Activated CD4-positive, alpha-beta T cell treated with anti-CD3 and anti-CD28 coated beads for 36 hours (primary cell): ENCODE measurements at regions of chr2 and their contacts with region 1.

Region 1: DNA sequence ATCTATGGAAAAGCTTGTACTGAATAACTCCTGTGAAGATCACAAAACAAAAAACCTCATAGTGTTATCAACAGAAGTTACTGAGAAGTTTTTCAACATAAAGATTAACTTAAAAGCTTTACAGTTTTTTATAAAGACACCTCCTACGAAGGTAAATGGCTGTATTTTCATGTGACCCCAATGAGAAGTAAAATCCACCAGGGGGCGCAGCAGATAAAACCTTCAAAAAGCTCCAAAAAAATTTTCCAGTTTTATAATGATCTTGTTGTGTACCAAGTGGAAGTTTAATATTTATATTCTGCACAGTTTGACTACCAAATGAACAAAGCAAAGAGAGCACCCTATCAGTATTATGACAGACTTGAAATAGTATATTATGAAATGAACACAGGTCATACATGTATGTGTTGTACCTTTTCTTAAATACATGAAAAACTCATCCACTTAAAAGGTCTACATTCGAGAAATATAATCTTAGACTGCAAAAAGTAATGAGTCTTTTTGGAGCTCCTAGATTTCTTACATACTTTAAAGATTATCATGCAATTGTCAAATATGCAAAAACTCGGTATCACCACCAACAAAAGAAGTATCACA is 38.5 kb downstream of the PNO1 start:
- DNase-seq: peak; percentile 57
- ATAC-seq: no peak
- H3K4me3 Mint-ChIP-seq: no peak overlapping the region
- H3K27ac Mint-ChIP-seq: no peak overlapping the region
- H3K4me1 Mint-ChIP-seq: peaks cover 52% of the 10 kb centered on the region
- H3K27me3 Mint-ChIP-seq: no peaks in the 10 kb centered on the region

Region 2: GRCh38 chr2:68185541-68186164 is 10.6 kb before region 1 on chr2:
- CTCF ChIA-PET with region 1: interaction called, 31 read pairs
- POLR2A ChIA-PET with region 1: no interaction called
- intact Hi-C with region 1: no loop called
- DNase-seq: peak; percentile 81
- ATAC-seq: peak; percentile 51
- H3K4me3 Mint-ChIP-seq: no peak overlapping the region
- H3K27ac Mint-ChIP-seq: no peak overlapping the region
- H3K4me1 Mint-ChIP-seq: peaks cover 20% of the 10 kb centered on the region
- H3K27me3 Mint-ChIP-seq: no peaks in the 10 kb centered on the region

Region 3: GRCh38 chr2:68217729-68218128 is 21.5 kb after region 1 on chr2:
- CTCF ChIA-PET with region 1: interaction called, 12 read pairs
- POLR2A ChIA-PET with region 1: interaction called, 3 read pairs
- intact Hi-C with region 1: loop called in 1 of 2 experiments (anchors 2 kb)
- DNase-seq: no peak
- ATAC-seq: no peak
- H3K4me3 Mint-ChIP-seq: no peak overlapping the region
- H3K27ac Mint-ChIP-seq: no peak overlapping the region
- H3K4me1 Mint-ChIP-seq: peaks cover 80% of the 10 kb centered on the region
- H3K27me3 Mint-ChIP-seq: no peaks in the 10 kb centered on the region

Region 4: GRCh38 chr2:68225119-68225632 is 29.0 kb after region 1 on chr2:
- CTCF ChIA-PET with region 1: interaction called, 18 read pairs
- POLR2A ChIA-PET with region 1: interaction called, 5 read pairs
- intact Hi-C with region 1: no loop called
- DNase-seq: peak; percentile 33
- ATAC-seq: peak; percentile 61
- H3K4me3 Mint-ChIP-seq: no peak overlapping the region
- H3K27ac Mint-ChIP-seq: no peak overlapping the region
- H3K4me1 Mint-ChIP-seq: peaks cover 84% of the 10 kb centered on the region
- H3K27me3 Mint-ChIP-seq: no peaks in the 10 kb centered on the region

Region 5: DNA sequence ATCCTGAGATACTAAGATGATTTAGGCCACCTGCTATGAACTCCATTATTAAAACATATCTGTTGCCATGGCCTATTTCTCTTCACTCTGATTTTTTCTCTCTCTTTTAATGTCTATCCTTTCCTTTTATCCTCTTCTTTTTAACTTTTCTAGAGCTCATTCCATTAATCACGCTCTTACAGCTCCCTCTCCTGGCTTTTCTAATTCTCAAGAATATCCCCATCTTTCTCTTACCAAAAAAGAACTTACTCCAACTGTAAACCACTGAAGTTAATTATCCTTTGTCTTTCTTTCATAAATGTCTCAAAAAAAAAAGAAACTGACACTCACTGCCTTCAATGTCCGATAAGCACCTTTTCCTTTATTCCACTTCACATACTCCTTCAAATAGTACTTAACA is 48.2 kb after region 1 on chr2:
- CTCF ChIA-PET with region 1: interaction called, 13 read pairs
- POLR2A ChIA-PET with region 1: no interaction called
- intact Hi-C with region 1: loop called in 1 of 2 experiments (anchors 5 kb)
- DNase-seq: no peak
- ATAC-seq: no peak
- H3K4me3 Mint-ChIP-seq: no peak overlapping the region
- H3K27ac Mint-ChIP-seq: no peak overlapping the region
- H3K4me1 Mint-ChIP-seq: peaks cover 29% of the 10 kb centered on the region
- H3K27me3 Mint-ChIP-seq: no peaks in the 10 kb centered on the region

Region 6: DNA sequence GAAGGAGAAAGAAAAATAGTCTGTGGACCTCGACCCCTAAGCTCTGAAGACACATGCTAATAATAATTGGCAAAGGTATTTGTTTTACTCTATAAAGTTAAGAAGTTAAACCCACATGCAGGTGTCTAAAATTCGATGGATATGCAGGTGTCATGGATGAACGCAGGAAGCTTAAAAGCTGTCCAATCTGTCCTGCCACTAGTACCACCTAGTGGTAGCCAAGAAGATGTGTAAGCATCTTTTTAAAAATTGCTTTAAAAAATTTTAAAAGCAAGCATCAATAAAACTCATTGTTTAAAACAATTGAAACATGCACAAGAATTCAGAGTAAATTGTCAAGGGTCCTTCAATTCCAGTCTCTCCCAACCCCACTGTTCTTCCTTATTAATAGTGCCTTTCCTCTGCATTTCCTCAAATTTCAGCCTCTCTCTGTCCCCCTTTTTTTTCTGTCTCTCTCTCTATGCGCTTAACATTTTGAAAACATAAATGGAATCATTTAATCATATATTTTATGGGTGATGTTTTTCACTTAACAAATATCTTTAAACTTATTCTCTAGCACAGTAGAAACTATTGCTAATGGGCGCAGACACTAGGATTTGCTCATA is 86.7 kb after region 1 on chr2:
- CTCF ChIA-PET with region 1: interaction called, 16 read pairs
- POLR2A ChIA-PET with region 1: no interaction called
- intact Hi-C with region 1: loop called in 1 of 2 experiments (anchors 2 kb)
- DNase-seq: peak; percentile 30
- ATAC-seq: peak; percentile 64
- H3K4me3 Mint-ChIP-seq: no peak overlapping the region
- H3K27ac Mint-ChIP-seq: no peak overlapping the region
- H3K4me1 Mint-ChIP-seq: peaks cover 5% of the 10 kb centered on the region
- H3K27me3 Mint-ChIP-seq: peaks cover 7% of the 10 kb centered on the region